ENCODE measurements at regions of chr4 and their contacts with region 1.

Region 1: GRCh38 chr4:122259849-122260248 is 107.7 kb downstream of the BLTP1 start:
- DNase-seq: no peak

Region 2: DNA sequence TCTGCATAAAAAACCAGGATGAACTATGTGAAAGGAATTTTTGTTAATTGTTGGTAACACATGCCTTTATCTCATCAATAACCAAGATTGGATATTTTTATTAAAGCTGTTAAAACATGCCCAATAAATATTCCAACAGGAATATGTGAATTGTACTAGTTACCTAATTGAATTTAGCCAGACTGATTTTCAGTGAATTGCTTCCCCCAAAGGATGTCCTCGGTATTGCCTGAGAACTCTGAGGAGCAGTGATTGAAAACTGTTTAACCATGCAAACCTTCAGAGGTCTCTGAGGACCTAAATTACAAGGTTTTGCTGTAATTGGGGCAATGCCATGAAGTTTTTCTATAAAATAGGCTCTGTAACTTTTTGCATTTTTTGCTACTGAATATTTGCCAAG is 41.1 kb before region 1 on chr4:
- intact Hi-C with region 1: loop called in 1 of 2 experiments (anchors 10 kb)
- DNase-seq: no peak